ENCODE measurements at regions of chr11 and their contacts with region 1.

Region 1: GRCh38 chr11:33987975-33988580 is 63.5 kb upstream of the CAPRIN1 start:
- DNase-seq: peak; percentile 79
- ATAC-seq: peak; percentile 98
- H3K4me3 ChIP-seq: no peak overlapping the region
- H3K27ac ChIP-seq: no peak overlapping the region
- H3K4me1 ChIP-seq: no peaks in the 10 kb centered on the region; a peak in 1 of 4 replicates
- H3K27me3 ChIP-seq: no peaks in the 10 kb centered on the region
- CTCF ChIP-seq: peak; percentile 77 to 93 (median 89)
- POLR2A ChIP-seq: no peak
- RAD21 ChIP-seq: peak; percentile 86

Region 2: GRCh38 chr11:33835143-33835878 is 152.8 kb before region 1 on chr11:
- CTCF ChIA-PET with region 1: interaction called, 24 read pairs
- POLR2A ChIA-PET with region 1: no interaction called
- RAD21 ChIA-PET with region 1: no interaction called
- intact Hi-C with region 1: loop called (anchors 5 kb)
- DNase-seq: peak; percentile 48
- ATAC-seq: peak; percentile 80
- H3K4me3 ChIP-seq: no peak overlapping the region; a peak in 1 of 4 replicates
- H3K27ac ChIP-seq: no peak overlapping the region
- H3K4me1 ChIP-seq: peaks cover 0 to 18% of the 10 kb centered on the region in 2 experiments; a peak in 2 of 4 replicates
- H3K27me3 ChIP-seq: 0 out of 2 replicates have a peak, but pooled peaks cover 3% of the 10 kb centered on the region
- CTCF ChIP-seq: peak; percentile 18 to 69 (median 36); a peak in 4 of 6 replicates
- POLR2A ChIP-seq: no peak
- RAD21 ChIP-seq: peak; percentile 75

Region 3: GRCh38 chr11:33857933-33858371 is 130.1 kb before region 1 on chr11:
- CTCF ChIA-PET with region 1: interaction called, 11 read pairs
- POLR2A ChIA-PET with region 1: no interaction called
- RAD21 ChIA-PET with region 1: no interaction called
- intact Hi-C with region 1: loop called (anchors 5 kb)
- DNase-seq: peak; percentile 55
- ATAC-seq: peak; percentile 99
- H3K4me3 ChIP-seq: no peak overlapping the region
- H3K27ac ChIP-seq: no peak overlapping the region
- H3K4me1 ChIP-seq: peaks cover 0 to 3% of the 10 kb centered on the region in 2 experiments; a peak in 1 of 4 replicates
- H3K27me3 ChIP-seq: no peaks in the 10 kb centered on the region
- CTCF ChIP-seq: peak; percentile 88 to 98 (median 95)
- POLR2A ChIP-seq: no peak
- RAD21 ChIP-seq: peak; percentile 97

Region 4: GRCh38 chr11:33863418-33864172 is 124.5 kb before region 1 on chr11:
- CTCF ChIA-PET with region 1: interaction called, 11 read pairs
- POLR2A ChIA-PET with region 1: no interaction called
- RAD21 ChIA-PET with region 1: no interaction called
- intact Hi-C with region 1: loop called (anchors 5 kb)
- DNase-seq: no peak
- ATAC-seq: no peak
- H3K4me3 ChIP-seq: no peak overlapping the region
- H3K27ac ChIP-seq: no peak overlapping the region
- H3K4me1 ChIP-seq: no peaks in the 10 kb centered on the region
- H3K27me3 ChIP-seq: 0 out of 2 replicates have a peak, but pooled peaks cover 9% of the 10 kb centered on the region
- CTCF ChIP-seq: no peak
- POLR2A ChIP-seq: no peak
- RAD21 ChIP-seq: no peak; the same call in 1 of the 2 replicates

Region 5: GRCh38 chr11:33936725-33937604 is 51.1 kb before region 1 on chr11:
- CTCF ChIA-PET with region 1: no interaction called
- POLR2A ChIA-PET with region 1: no interaction called
- RAD21 ChIA-PET with region 1: no interaction called
- intact Hi-C with region 1: no loop called
- DNase-seq: no peak
- ATAC-seq: no peak
- H3K4me3 ChIP-seq: no peak overlapping the region
- H3K27ac ChIP-seq: no peak overlapping the region
- H3K4me1 ChIP-seq: peaks cover 8 to 18% of the 10 kb centered on the region in 2 experiments; a peak in 3 of 4 replicates
- H3K27me3 ChIP-seq: no peaks in the 10 kb centered on the region
- CTCF ChIP-seq: no peak
- POLR2A ChIP-seq: no peak
- RAD21 ChIP-seq: no peak

Region 6: DNA sequence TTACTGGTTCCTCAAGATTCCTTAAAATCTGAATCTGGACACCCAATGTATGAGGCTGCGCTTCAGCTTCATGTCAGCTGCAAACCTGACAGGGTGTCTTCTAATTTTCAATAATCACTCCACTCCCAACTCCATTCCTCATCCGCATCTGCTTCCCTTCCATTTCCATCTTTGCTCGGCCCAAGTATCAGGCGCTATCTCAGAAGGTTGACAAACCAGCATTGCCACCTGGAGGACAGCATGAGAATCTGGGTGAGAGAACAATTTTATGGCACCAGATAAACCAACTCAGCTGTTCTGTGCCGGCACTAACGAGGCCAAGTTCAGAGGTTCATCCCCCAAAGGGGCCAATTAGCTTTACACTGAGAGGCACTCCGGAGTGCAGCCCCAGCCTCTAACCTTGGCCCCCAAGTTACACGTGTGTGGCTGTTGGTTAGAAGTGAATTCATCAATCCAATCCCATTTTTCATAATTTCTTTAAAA is 17.1 kb before region 1 on chr11:
- CTCF ChIA-PET with region 1: interaction called, 15 read pairs
- POLR2A ChIA-PET with region 1: interaction called, 3 read pairs
- RAD21 ChIA-PET with region 1: no interaction called
- intact Hi-C with region 1: no loop called
- DNase-seq: peak; percentile 64
- ATAC-seq: peak; percentile 94
- H3K4me3 ChIP-seq: peak overlapping the region in 1 of 2 experiments; percentile 50; a peak in 1 of 4 replicates
- H3K27ac ChIP-seq: no peak overlapping the region
- H3K4me1 ChIP-seq: peaks cover 2 to 15% of the 10 kb centered on the region in 2 experiments; a peak in 3 of 4 replicates
- H3K27me3 ChIP-seq: no peaks in the 10 kb centered on the region
- CTCF ChIP-seq: peak; percentile 72 to 91 (median 76)
- POLR2A ChIP-seq: no peak
- RAD21 ChIP-seq: peak; percentile 96

Region 7: GRCh38 chr11:33976495-33977199 is 11.4 kb before region 1 on chr11:
- CTCF ChIA-PET with region 1: interaction called, 18 read pairs
- POLR2A ChIA-PET with region 1: interaction called, 3 read pairs
- RAD21 ChIA-PET with region 1: no interaction called
- intact Hi-C with region 1: no loop called
- DNase-seq: no peak
- ATAC-seq: no peak
- H3K4me3 ChIP-seq: no peak overlapping the region
- H3K27ac ChIP-seq: no peak overlapping the region
- H3K4me1 ChIP-seq: peaks cover 7 to 13% of the 10 kb centered on the region in 2 experiments
- H3K27me3 ChIP-seq: no peaks in the 10 kb centered on the region
- CTCF ChIP-seq: no peak
- POLR2A ChIP-seq: no peak
- RAD21 ChIP-seq: no peak

Region 8: DNA sequence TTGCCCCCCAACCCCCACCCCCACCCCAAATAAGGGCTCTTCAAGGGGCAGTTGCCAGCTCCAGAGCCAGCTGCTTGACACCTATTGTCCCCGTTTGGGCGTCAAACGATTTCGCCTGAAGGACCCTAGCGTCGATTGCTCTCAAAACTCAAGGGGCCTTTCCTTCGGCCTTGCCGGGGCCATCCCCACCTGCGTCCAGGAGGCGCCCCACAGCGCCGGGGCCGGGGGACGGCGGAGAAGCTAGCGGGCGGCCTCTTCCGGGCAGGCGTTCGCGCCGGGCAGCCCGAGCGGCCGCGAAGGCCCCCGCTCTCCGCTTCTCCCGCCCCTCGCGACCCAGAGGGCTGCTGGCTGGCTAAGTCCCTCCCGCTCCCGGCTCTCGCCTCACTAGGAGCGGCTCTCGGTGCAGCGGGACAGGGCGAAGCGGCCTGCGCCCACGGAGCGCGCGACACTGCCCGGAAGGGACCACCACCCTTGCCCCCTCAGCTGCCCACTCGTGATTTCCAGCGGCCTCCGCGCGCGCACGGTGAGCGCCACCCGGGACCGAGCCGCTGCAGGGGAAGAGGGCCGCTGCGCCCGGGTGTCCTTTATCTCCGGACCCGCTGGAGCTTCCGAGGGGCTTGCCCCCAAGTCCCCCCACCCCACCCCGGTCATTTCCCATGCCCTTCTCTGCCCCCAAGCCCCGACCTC is 63.4 kb after region 1 on chr11 and contains the start of gene CAPRIN1:
- CTCF ChIA-PET with region 1: no interaction called
- POLR2A ChIA-PET with region 1: no interaction called
- RAD21 ChIA-PET with region 1: no interaction called
- intact Hi-C with region 1: no loop called
- DNase-seq: peak; percentile 84
- ATAC-seq: peak; percentile 84
- H3K4me3 ChIP-seq: peak within 1 kb of the TSS; percentile 69 to 71
- H3K27ac ChIP-seq: peak within 1 kb of the TSS; percentile 99
- H3K4me1 ChIP-seq: peaks cover 17 to 37% of the 10 kb centered on the region in 2 experiments; a peak in 3 of 4 replicates
- H3K27me3 ChIP-seq: no peaks in the 10 kb centered on the region
- CTCF ChIP-seq: no peak
- POLR2A ChIP-seq: peak; percentile 71
- RAD21 ChIP-seq: 0 out of 2 replicates have a peak, but pooled peaks have one; percentile 20
- total RNA-seq, gene CAPRIN1: 285 TPM

Region 9: GRCh38 chr11:34313099-34313517 is 325.0 kb after region 1 on chr11:
- CTCF ChIA-PET with region 1: no interaction called
- POLR2A ChIA-PET with region 1: no interaction called
- RAD21 ChIA-PET with region 1: no interaction called
- intact Hi-C with region 1: no loop called
- DNase-seq: no peak
- ATAC-seq: no peak; the same call in 1 of the 2 replicates
- H3K4me3 ChIP-seq: no peak overlapping the region
- H3K27ac ChIP-seq: no peak overlapping the region
- H3K4me1 ChIP-seq: peaks cover 15 to 29% of the 10 kb centered on the region in 2 experiments
- H3K27me3 ChIP-seq: no peaks in the 10 kb centered on the region
- CTCF ChIP-seq: no peak
- POLR2A ChIP-seq: no peak
- RAD21 ChIP-seq: no peak